ENCODE measurements at regions of chr4 and their contacts with region 1.

Region 1: DNA sequence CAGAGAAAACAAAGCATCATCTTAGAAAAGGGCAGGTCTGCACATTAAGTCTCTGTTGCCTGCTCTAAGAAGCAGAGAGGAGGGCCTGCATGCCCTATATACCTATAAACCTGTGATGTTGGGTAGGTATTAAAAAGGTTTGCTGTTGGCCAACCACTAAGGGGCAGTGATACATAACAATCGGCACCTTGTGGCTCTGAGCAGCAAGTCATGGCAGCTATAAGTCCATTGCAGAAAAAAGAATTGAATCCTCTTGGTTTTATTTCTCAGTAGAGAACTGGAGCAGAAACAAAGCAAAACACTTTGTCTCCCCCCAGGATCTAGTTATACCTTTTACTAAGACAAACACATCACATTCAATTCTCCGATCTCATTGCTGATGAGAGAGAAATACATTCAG is 1364.4 kb downstream of the STIM2 start:
- DNase-seq: peak; percentile 57
- H3K4me3 ChIP-seq: no peak overlapping the region
- H3K27ac ChIP-seq: no peak overlapping the region
- H3K4me1 ChIP-seq: no peaks in the 10 kb centered on the region
- H3K27me3 ChIP-seq: no peaks in the 10 kb centered on the region
- CTCF ChIP-seq: peak; percentile 15 to 43
- POLR2A ChIP-seq: no peak

Region 2: DNA sequence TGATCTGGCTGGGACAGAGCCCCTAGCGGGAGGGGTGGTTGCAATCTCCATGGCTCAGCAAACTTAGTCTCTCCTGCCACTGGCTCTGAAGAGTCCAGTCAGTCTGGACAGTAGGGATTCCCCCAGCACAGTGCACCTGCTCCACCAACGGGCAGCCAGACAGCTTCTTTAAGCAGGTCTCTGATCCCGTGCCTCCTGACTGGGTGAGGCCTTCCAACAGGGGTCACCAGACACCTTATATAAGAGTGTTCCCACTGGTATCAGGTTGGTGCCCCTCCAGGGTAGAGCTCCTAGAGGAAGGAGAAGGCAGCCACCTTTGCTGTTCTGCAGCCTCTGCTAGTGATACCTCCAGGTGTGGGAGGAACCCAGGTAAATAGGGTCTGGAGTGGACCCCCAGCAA is 28.9 kb after region 1 on chr4:
- CTCF ChIA-PET with region 1: no interaction called
- POLR2A ChIA-PET with region 1: no interaction called
- dilution Hi-C with region 1: no loop called
- intact Hi-C with region 1: no loop called
- DNase-seq: no peak
- H3K4me3 ChIP-seq: no peak overlapping the region
- H3K27ac ChIP-seq: no peak overlapping the region
- H3K4me1 ChIP-seq: no peaks in the 10 kb centered on the region
- H3K27me3 ChIP-seq: no peaks in the 10 kb centered on the region
- CTCF ChIP-seq: no peak
- POLR2A ChIP-seq: no peak

Region 3: DNA sequence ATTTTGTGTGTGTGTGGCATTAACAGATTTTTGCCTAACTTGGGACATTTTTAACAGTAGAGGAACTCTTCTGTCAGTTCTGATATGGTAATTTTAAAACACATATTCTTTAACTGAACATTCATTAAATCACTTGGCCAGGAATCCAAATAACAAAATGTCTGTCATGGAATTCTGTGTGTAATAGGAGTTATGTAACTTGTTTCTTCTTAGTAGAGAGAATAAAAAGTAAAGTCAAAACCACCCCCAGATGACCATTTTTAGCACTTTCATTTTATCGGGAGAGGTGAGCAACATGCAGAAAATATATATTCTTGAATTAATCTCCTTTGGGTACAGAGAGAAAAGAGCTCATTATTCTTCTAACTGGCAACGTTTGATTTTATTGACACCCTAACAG is 375.9 kb after region 1 on chr4:
- CTCF ChIA-PET with region 1: no interaction called
- POLR2A ChIA-PET with region 1: no interaction called
- dilution Hi-C with region 1: no loop called
- intact Hi-C with region 1: loop called (anchors 10 kb)
- DNase-seq: no peak
- H3K4me3 ChIP-seq: no peak overlapping the region
- H3K27ac ChIP-seq: no peak overlapping the region
- H3K4me1 ChIP-seq: no peaks in the 10 kb centered on the region
- H3K27me3 ChIP-seq: no peaks in the 10 kb centered on the region
- CTCF ChIP-seq: no peak
- POLR2A ChIP-seq: no peak

Region 4: GRCh38 chr4:28686618-28687017 is 461.6 kb after region 1 on chr4:
- CTCF ChIA-PET with region 1: interaction called, 5 read pairs
- POLR2A ChIA-PET with region 1: no interaction called
- dilution Hi-C with region 1: no loop called
- intact Hi-C with region 1: loop called (anchors 1 kb)
- DNase-seq: peak; percentile 2
- H3K4me3 ChIP-seq: no peak overlapping the region
- H3K27ac ChIP-seq: no peak overlapping the region
- H3K4me1 ChIP-seq: no peaks in the 10 kb centered on the region
- H3K27me3 ChIP-seq: no peaks in the 10 kb centered on the region
- CTCF ChIP-seq: peak; percentile 28 to 42
- POLR2A ChIP-seq: no peak

Region 5: DNA sequence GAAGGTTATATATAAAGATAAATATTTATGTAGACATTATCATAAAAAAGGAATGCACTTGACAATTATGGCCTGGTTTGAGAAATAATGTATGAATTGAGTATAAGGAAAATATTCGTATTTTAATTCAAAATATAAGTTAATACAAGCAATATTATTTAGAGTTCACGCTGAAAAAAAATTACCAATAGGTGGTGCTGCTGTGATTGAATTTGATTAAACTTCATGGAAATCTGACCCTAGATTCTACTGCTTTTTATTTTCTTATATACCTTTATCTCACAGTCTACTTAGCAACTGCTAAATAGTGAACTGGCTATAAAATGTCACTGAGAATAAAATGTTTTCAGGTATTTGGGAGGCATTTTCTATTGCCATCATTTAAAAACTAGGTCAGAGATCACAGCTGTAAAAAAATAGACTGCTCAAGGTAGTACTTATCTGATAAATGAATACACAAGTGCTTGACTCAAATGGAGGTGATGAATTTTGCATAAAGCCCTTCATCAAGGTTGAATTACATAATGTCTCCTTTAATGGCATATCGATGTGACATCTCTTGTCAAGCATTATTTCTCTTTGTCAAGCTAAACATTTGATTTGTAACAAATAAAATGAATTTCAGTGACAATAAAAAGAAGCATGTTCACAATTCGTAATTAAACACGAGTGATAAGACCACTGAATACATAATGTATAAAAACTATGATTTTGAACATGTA is 856.3 kb after region 1 on chr4:
- CTCF ChIA-PET with region 1: interaction called, 6 read pairs
- POLR2A ChIA-PET with region 1: no interaction called
- dilution Hi-C with region 1: no loop called
- intact Hi-C with region 1: loop called (anchors 2 kb)
- DNase-seq: peak; percentile 65
- H3K4me3 ChIP-seq: no peak overlapping the region
- H3K27ac ChIP-seq: no peak overlapping the region
- H3K4me1 ChIP-seq: no peaks in the 10 kb centered on the region
- H3K27me3 ChIP-seq: no peaks in the 10 kb centered on the region
- CTCF ChIP-seq: peak; percentile 26
- POLR2A ChIP-seq: no peak